Activated CD4-positive, alpha-beta T cell treated with anti-CD3 and anti-CD28 coated beads for 36 hours (primary cell): ENCODE measurements at regions of chr14 and their contacts with region 1.

Region 1: GRCh38 chr14:55333711-55334485 is 62.7 kb downstream of the FBXO34 start:
- DNase-seq: no peak
- ATAC-seq: peak; percentile 31
- H3K4me3 Mint-ChIP-seq: peak overlapping the region; percentile 16
- H3K27ac Mint-ChIP-seq: peak overlapping the region; percentile 69
- H3K4me1 Mint-ChIP-seq: peaks cover 85% of the 10 kb centered on the region
- H3K27me3 Mint-ChIP-seq: no peaks in the 10 kb centered on the region

Region 2: GRCh38 chr14:55285048-55285652 is 48.7 kb before region 1 on chr14:
- CTCF ChIA-PET with region 1: interaction called, 3 read pairs
- POLR2A ChIA-PET with region 1: no interaction called
- intact Hi-C with region 1: loop called in 1 of 2 experiments (anchors 5 kb)
- DNase-seq: no peak
- ATAC-seq: no peak
- H3K4me3 Mint-ChIP-seq: no peak overlapping the region
- H3K27ac Mint-ChIP-seq: no peak overlapping the region
- H3K4me1 Mint-ChIP-seq: peaks cover 47% of the 10 kb centered on the region
- H3K27me3 Mint-ChIP-seq: no peaks in the 10 kb centered on the region

Region 3: DNA sequence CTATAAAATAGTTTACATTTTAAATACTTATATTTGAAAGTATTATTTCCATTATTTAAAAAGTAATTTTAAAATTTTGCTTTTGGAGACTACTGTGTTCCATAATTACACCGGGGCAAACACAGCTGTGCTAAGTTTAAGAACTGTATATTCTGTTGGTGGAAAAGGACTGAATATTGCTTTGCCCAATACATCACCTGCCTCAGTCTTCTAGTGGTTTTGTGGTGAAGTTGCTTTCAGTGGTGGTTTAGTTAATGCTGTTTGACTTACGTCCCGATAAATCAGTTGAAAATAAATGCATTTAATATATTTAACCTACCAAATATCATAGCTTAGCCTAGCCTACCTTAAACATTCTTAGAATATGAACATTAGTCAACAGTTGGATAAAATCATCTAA is 39.3 kb before region 1 on chr14:
- CTCF ChIA-PET with region 1: no interaction called
- POLR2A ChIA-PET with region 1: interaction called, 10 read pairs
- intact Hi-C with region 1: loop called in 1 of 2 experiments (anchors 5 kb)
- DNase-seq: no peak
- ATAC-seq: no peak
- H3K4me3 Mint-ChIP-seq: no peak overlapping the region
- H3K27ac Mint-ChIP-seq: no peak overlapping the region
- H3K4me1 Mint-ChIP-seq: peaks cover 35% of the 10 kb centered on the region
- H3K27me3 Mint-ChIP-seq: no peaks in the 10 kb centered on the region

Region 4: GRCh38 chr14:55348766-55349453 is 15.0 kb after region 1 on chr14:
- CTCF ChIA-PET with region 1: interaction called, 13 read pairs
- POLR2A ChIA-PET with region 1: no interaction called
- intact Hi-C with region 1: loop called (anchors 1 to 2 kb)
- DNase-seq: no peak
- ATAC-seq: peak; percentile 82
- H3K4me3 Mint-ChIP-seq: no peak overlapping the region
- H3K27ac Mint-ChIP-seq: peak overlapping the region; percentile 33
- H3K4me1 Mint-ChIP-seq: peaks cover 45% of the 10 kb centered on the region
- H3K27me3 Mint-ChIP-seq: no peaks in the 10 kb centered on the region

Region 5: DNA sequence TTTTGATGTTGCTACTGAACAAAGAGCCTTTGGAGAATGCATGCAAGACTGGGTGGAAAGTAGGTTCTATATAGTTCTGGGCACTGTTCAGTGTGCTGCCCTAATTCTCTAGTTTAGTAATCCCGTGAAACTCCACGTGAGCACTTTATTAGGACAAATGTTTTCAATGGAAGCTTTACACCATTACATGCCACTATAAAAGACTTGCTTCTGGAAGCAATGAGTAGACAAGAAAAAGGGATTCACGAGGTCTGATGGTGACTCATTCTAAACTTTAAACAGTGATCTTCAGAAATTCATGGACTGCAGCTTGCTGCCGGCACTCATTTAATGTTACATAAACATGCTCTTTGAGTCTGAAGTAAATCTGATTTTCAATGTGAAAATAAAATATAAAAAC is 55.4 kb after region 1 on chr14:
- CTCF ChIA-PET with region 1: interaction called, 5 read pairs
- POLR2A ChIA-PET with region 1: interaction called, 4 read pairs
- intact Hi-C with region 1: loop called (anchors 1 to 5 kb)
- DNase-seq: no peak
- ATAC-seq: no peak
- H3K4me3 Mint-ChIP-seq: no peak overlapping the region
- H3K27ac Mint-ChIP-seq: no peak overlapping the region
- H3K4me1 Mint-ChIP-seq: peaks cover 44% of the 10 kb centered on the region
- H3K27me3 Mint-ChIP-seq: no peaks in the 10 kb centered on the region

Region 6: DNA sequence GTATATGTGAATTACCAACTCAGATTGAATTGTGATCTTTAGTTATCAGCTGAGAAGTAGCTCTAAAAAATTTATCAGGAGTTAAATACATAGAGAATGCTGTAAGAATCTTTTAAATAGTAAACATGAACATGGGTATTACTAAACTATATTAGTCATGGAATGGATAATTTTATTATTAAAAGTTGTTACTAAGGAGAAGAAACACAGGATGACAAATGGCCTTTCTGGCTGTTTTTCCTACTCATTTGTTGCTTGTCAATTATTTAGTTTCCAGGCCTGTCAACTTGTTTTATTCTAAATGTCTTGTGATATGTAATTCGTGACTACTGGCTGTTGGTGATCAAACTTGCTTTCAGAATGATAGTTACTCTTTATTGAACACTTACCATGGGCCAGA is 304.8 kb after region 1 on chr14:
- CTCF ChIA-PET with region 1: no interaction called
- POLR2A ChIA-PET with region 1: no interaction called
- intact Hi-C with region 1: no loop called
- DNase-seq: no peak
- ATAC-seq: no peak
- H3K4me3 Mint-ChIP-seq: no peak overlapping the region
- H3K27ac Mint-ChIP-seq: no peak overlapping the region
- H3K4me1 Mint-ChIP-seq: peaks cover 6% of the 10 kb centered on the region
- H3K27me3 Mint-ChIP-seq: no peaks in the 10 kb centered on the region